Aorta (tissue), 5 donors: ENCODE measurements at regions of chr1 and their contacts with region 1.

Region 1: DNA sequence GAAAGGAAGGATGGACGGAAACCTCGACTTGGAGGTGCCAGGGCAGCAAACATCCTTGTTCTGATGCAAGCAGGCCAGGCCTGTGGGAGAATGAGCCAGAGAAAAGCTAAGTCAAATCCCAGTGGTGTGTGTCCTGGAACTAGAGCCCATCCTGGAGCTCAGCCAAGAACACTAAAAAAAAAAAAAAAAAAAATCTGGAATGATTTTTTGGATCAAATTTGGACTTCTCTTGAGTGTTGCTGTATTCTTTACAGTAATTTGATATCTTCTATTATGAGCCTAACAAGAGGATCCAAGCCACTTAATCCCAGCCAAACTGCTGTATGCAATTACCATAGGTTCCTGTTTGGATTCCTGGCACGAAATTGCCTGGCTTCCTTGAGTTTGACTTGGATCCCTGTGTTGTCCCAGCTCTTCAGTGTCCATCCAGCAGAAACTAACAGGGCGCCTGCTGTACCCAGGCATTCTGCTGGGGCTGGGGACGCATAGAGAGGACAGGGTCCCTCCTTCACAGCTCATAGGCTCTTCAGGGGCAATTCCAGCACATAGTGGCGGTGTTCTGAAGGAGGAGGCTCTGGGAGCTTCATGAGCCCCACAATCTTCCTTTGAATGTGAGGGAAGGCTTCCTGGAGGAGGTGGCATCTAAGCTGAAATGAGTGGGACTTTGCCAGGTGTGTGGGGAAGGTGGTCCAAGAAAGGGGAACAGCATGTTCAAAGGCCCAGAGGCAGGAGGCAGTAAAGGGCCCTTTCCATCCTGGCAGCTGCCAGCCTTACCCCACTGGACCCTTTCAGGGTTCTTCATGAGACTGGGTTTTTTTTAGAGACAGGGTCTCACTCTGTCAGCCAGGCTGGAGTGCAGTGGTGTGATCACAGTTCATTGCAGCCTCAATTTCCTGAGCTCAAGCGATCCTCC is 24.7 kb downstream of the EPHX1 start:
- DNase-seq: peak; percentile 83 to 84
- ATAC-seq: peak; percentile 93
- H3K4me3 ChIP-seq: no peak overlapping the region
- H3K27ac ChIP-seq: peak overlapping the region in 1 of 2 donors; percentile 72
- H3K4me1 ChIP-seq: no peaks in the 10 kb centered on the region
- H3K27me3 ChIP-seq: no peaks in the 10 kb centered on the region

Region 2: DNA sequence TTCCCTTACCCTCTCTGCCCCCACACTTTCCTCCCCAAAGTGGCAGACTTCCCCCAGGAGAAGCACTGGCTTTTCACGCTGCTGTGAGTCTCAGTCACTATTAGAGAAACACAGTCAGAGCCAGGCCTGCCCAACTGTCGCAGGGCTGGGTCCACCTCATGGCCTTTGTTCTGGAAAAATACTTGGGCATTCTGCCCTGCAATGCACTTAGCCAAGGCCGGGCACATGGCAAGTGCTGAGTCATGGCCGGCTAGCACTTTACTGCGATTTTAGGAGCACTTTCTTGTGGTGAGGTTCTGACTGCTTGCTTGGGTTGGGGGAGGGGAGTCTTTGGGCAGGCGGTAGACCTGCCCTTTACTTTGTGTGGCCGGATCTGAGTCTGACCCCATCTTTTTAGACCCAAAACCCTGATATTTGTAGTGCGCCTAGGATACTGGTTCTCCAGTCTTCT is 17.0 kb before region 1 on chr1:
- intact Hi-C with region 1: loop called in 1 of 2 experiments (anchors 2 kb)
- DNase-seq: peak; percentile 89 to 90
- ATAC-seq: peak; percentile 91
- H3K4me3 ChIP-seq: no peak overlapping the region
- H3K27ac ChIP-seq: peak overlapping the region; percentile 51 to 96
- H3K4me1 ChIP-seq: peaks cover 0 to 8% of the 10 kb centered on the region in 2 donors
- H3K27me3 ChIP-seq: no peaks in the 10 kb centered on the region

Region 3: GRCh38 chr1:226062558-226063223 is 228.0 kb after region 1 on chr1 and contains the start of gene H3-3A:
- intact Hi-C with region 1: no loop called
- DNase-seq: peak; percentile 99 to 100
- ATAC-seq: peak; percentile 96
- H3K4me3 ChIP-seq: peak within 1 kb of the TSS; percentile 91 to 97
- H3K27ac ChIP-seq: peak within 1 kb of the TSS; percentile 44 to 94
- H3K4me1 ChIP-seq: peaks cover 0 to 5% of the 10 kb centered on the region in 2 donors
- H3K27me3 ChIP-seq: no peaks in the 10 kb centered on the region
- total RNA-seq, gene H3-3A: 310 to 349 TPM